HAP-1 (cell line): ENCODE measurements at regions of chr6 and their contacts with region 1.

Region 1: DNA sequence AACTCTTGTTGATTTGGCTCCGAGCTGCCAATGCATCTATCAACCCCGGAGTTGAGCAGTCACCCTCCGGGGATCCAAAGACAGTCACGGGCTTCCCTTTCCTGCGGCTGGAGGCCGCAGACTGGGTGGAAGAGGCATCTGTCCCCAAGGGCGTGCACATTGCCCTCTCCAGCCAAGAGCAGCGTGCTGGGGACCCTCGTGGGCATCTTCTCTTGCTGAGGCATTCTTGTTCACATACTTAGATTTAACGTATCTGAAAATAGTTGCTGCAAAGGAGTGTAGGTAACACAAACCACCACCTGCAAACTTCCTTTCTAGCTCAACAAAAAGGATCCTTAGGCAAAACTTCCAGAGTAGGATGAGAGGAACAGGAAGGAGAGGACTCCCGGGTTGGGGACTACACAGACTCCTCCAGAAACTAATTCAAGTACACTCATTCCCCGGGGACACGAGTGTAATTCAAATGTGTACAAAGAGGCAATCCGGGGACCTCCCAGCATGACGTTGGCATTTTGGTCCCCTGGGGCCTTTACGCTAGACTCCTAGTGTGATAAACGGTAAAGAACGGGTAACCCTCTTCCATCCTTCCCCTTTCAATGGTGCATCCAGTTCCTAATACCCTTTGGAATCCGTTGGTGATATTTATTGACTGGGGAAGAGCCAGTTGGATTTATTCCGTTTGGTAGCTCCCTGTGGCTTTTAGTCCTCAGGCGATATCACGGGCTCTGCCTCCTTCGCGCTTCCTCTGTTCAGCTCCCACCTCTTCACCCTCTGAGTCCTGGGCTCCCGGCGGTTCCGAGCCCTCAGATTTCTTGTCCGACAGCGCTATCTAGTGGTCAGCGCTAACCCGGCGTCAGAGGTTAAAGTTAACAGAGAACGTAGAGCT is 2.7 kb upstream of the COL12A1 start:
- DNase-seq: peak; percentile 74 to 90
- H3K4me3 ChIP-seq: no peak overlapping the region
- H3K4me1 ChIP-seq: peaks cover 6% of the 10 kb centered on the region
- H3K27me3 ChIP-seq: peaks cover 51% of the 10 kb centered on the region

Region 2: DNA sequence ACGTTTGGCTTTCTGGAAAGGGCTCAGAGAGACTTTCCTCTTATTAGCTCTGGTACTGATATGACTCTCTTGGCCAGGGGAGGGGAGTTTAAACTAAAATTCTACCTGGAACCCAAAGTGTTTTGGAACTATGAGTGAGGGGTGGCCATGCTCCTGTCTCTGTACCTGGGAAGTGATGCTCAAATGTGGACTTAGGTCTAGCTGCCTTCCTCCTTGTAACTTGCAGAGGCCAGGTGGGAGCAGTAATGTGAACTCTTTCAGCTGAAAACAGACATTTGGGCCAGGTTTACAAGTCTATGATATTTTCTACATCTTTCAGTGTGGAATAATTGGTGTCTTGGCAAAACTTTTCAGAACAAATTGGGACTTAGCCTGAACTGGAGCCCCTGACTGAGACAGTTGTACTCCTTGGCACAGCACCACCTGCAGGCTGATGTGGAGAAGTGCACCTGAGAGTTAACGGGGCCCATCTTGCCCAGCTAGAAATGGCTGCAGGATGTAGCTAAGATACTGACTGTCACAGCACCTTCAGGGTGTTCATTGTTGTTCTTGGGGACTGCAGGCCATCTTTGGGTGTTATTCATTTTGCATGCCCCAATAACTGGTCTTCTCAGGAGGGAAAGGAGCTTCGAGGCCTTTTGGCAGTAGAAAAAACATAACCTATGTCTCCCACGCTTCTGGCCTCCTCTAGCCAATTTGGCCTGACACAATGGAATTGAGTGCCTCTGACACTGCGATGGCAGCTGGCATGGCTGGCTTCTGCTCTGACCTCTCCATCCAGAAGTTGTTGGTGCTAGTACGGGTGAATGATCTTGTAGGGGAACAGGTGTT is 1475.5 kb before region 1 on chr6:
- in situ Hi-C with region 1: loop called (anchors 25 kb)
- DNase-seq: peak; percentile 34 to 81
- H3K4me3 ChIP-seq: no peak overlapping the region
- H3K4me1 ChIP-seq: no peaks in the 10 kb centered on the region
- H3K27me3 ChIP-seq: no peaks in the 10 kb centered on the region

Region 3: DNA sequence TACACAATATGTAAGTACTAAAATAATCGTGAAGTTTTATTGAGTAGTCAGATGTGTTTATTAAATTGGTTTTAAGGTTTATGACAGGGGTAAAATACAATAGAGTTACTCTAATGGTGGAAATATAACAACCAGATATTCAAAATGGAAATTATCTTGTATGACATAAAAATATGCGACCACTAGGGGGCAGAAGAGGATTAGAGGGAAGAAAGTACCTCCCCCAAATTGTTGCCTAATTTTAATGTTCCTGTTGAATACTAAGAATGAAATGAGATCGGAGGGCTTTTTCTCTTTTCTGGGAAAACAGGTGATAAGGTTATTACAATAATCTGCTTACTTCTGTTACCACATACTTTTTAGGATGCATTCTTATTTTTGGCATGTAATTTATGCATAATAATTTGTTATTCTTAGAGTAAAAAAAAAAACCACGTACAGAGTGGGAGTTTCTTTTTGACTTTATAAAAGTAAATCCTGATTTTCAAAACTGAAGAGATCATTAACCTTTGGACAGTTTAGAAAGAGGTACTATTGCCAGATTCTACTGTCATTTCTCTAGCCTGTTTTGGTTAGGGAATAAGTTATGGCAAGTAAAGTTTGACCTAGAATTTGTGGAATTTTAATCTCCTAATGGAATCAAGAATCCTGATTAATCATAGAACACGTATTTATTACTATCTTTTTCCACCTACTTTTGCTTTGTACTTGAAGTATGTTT is 1353.4 kb before region 1 on chr6:
- in situ Hi-C with region 1: loop called (anchors 25 kb)
- DNase-seq: peak; percentile 39 to 61
- H3K4me3 ChIP-seq: no peak overlapping the region
- H3K4me1 ChIP-seq: no peaks in the 10 kb centered on the region
- H3K27me3 ChIP-seq: no peaks in the 10 kb centered on the region

Region 4: GRCh38 chr6:75130784-75131183 is 77.8 kb before region 1 on chr6:
- in situ Hi-C with region 1: no loop called
- DNase-seq: no peak
- H3K4me3 ChIP-seq: no peak overlapping the region
- H3K4me1 ChIP-seq: no peaks in the 10 kb centered on the region
- H3K27me3 ChIP-seq: peaks cover 8% of the 10 kb centered on the region